Activated naive CD8-positive, alpha-beta T cell treated with anti-CD3 and anti-CD28 coated beads, Interleukin-2, amount 10 ng/mL, durations not matched to agents 7 days and 5 days (primary cell): ENCODE measurements at regions of chr7 and their contacts with region 1.

Region 1: DNA sequence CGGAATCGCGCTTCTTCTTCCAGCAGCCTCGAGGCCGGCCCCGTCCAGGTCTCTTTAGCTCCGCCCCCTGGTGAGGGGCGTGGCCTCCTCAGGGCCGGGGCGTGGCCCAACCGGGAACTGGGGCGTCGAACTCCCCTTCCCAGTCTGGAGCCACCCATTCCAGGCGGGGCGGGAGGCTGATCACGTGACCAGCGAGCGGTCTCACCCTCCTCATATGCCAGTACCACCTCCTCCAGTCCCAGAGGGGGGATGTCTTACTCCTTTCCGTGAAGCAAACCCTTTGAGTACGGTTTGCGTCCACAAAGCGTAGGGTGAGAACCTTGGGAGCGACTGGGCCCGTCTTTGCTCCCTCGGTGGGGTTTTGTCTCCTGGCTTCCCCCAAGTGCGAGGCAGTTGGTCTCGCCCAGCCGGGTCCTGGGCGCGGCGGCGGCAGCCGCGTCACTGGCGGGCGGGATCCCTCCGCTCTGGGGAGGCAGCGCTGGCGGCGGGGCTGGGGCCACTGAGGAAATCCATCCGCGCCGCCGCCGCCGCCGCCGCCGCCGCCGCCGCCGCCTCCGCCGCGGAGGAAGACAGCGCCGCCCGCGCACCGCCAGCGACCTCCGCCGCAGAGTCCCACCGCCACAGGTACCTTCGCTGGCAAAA is at the start of gene GNB2:
- DNase-seq: peak; percentile 100
- ATAC-seq: peak; percentile 64
- H3K4me3 Mint-ChIP-seq: peak within 1 kb of the TSS; percentile 98
- H3K27ac Mint-ChIP-seq: peak within 1 kb of the TSS; percentile 95
- H3K4me1 Mint-ChIP-seq: peaks cover 16% of the 10 kb centered on the region
- H3K27me3 Mint-ChIP-seq: peaks cover 7% of the 10 kb centered on the region
- total RNA-seq, gene GNB2: 203 to 216 TPM

Region 2: DNA sequence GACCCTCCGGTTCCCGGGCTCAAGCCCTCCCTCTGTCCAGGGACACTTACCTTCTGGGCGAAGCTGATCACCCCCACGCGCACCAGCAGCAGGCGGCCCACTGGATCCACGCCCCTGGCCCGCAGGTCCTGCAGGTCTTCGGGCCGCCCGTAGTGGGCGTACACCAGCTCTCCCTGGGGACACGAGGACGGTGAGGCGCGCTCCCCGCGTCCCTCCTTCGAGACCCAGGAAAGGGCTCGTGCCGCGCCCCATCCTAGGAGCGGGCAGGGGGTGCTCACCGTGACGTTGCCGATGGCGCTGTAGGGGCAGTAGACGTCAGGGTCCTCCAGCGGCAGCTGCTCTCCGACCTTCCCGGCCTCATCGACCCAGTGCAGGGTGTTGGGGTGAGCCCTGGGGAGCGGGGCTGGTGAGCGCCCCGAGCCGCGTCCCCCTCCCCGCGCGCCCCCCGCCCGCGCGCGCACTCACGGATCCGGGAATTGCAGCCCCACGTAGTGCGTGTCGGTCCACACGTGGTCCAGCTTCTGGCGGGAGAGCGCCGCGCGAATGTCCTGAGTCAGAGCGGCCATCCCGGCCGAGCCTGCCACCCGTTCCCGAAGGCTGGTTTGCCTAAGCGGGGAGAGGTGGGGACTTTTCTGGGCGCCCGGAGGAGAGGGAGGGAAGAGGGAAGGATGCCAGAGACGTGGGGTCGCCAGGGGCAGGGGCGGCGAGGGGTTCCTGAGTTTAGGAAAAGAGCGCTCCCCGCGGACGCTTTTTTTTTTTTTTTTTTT is 40.3 kb before region 1 on chr7:
- POLR2A ChIA-PET with region 1: interaction called, 13 read pairs
- DNase-seq: peak; percentile 73
- ATAC-seq: peak; percentile 71
- H3K4me3 Mint-ChIP-seq: peak overlapping the region; percentile 87
- H3K27ac Mint-ChIP-seq: peak overlapping the region; percentile 87
- H3K4me1 Mint-ChIP-seq: peaks cover 31% of the 10 kb centered on the region
- H3K27me3 Mint-ChIP-seq: peaks cover 12% of the 10 kb centered on the region